ENCODE measurements at regions of chr15 and their contacts with region 1.

Region 1: DNA sequence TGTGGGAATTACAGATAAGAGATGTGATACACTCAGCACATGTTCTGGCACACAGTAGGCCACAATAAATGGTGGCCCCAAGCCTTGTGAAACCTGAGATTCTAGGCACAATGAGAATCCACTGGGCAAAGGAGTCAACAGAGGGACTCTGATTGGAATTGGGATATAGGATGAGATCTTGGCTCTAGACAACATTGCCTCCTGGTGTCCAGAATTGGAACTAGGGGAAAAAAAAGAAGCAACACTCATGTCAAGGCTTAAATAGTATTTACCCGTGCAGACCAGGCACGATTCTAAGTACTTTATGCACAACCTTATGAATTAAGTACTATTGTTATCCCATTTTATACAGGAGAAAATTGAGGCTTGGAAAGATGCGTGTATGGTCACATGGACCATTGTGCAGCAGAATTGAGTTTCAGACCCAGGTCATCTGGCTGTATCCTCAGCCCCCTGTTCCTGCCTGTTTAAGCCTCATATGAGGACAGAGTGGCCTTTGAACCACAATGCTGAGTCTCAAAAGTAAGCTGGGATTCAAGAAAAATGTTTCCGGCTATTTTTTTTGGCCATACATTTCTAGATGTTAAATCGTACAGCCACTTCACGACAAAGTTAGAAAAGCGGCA is 124.8 kb downstream of the SV2B start:
- DNase-seq: peak; percentile 68
- H3K4me3 ChIP-seq: no peak overlapping the region
- H3K27ac ChIP-seq: no peak overlapping the region
- H3K4me1 ChIP-seq: no peaks in the 10 kb centered on the region
- H3K27me3 ChIP-seq: no peaks in the 10 kb centered on the region
- CTCF ChIP-seq: peak; percentile 75

Region 2: GRCh38 chr15:91055548-91056331 is 169.1 kb before region 1 on chr15:
- CTCF ChIA-PET with region 1: interaction called, 4 read pairs
- POLR2A ChIA-PET with region 1: no interaction called
- intact Hi-C with region 1: loop called (anchors 1 kb)
- DNase-seq: peak; percentile 89
- H3K4me3 ChIP-seq: no peak overlapping the region
- H3K27ac ChIP-seq: no peak overlapping the region
- H3K4me1 ChIP-seq: peaks cover 11% of the 10 kb centered on the region
- H3K27me3 ChIP-seq: no peaks in the 10 kb centered on the region
- CTCF ChIP-seq: peak; percentile 85

Region 3: DNA sequence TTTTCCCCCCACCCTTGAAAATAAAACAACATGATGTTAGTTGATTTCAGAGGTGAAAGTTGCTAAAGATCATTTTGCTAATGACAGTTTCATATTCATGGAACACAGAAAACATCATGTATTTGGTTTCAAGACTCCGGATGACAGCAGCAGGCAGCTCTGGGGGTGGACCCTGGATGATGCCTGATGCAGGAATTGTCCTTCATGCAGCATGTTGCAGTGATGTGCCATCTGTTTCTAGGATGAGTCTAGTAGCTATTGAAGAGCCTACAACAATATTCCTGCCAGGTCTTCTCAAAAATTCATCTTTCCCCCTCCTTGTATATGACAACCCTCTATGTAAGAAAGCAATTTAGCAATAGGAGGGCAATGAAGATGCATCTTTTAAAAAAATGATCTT is 16.5 kb before region 1 on chr15:
- CTCF ChIA-PET with region 1: no interaction called
- POLR2A ChIA-PET with region 1: interaction called, 13 read pairs
- intact Hi-C with region 1: no loop called
- DNase-seq: no peak
- H3K4me3 ChIP-seq: no peak overlapping the region
- H3K27ac ChIP-seq: no peak overlapping the region
- H3K4me1 ChIP-seq: no peaks in the 10 kb centered on the region
- H3K27me3 ChIP-seq: peaks cover 3% of the 10 kb centered on the region
- CTCF ChIP-seq: no peak

Region 4: DNA sequence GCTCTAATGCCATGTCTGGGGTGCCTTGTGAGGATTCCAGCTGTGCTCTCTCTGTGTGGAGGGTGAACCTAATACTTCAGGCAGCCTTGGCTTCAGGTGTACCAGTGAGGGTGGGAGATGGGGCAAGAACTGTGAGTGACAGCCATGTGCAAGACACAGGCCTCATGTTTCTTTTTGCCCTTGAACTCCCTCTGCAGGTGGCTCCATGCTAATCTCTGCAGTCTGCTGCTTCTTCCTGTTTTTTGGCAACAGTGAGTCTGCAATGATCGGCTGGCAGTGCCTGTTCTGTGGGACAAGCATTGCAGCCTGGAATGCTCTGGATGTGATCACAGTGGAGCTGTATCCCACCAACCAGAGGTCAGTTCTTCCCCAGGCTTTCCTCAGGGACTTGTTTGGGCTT is 64.5 kb after region 1 on chr15:
- CTCF ChIA-PET with region 1: no interaction called
- POLR2A ChIA-PET with region 1: no interaction called
- intact Hi-C with region 1: no loop called
- DNase-seq: peak; percentile 16
- H3K4me3 ChIP-seq: no peak overlapping the region
- H3K27ac ChIP-seq: no peak overlapping the region
- H3K4me1 ChIP-seq: no peaks in the 10 kb centered on the region
- H3K27me3 ChIP-seq: no peaks in the 10 kb centered on the region
- CTCF ChIP-seq: peak; percentile 35; the same call in 1 of the 2 replicates

Region 5: DNA sequence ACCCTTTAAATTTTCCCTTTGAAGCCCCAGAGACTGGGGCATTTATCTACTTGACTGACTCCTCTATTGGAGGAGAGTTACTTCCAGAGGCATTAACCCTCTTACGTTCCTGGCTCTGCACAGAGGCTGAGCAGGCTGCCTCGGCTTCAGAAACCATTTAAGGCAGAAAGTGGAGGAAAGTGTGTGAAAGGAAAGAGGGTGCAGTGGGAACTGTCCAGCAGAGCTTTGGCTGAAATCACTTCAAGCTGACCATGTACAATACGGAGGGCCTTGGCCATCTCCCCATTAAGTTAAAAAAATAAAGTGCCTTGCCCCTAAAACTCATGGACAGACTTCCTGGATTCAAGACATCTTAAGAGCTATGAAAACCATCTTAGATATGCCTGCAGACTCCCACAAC is 113.9 kb after region 1 on chr15:
- CTCF ChIA-PET with region 1: no interaction called
- POLR2A ChIA-PET with region 1: no interaction called
- intact Hi-C with region 1: no loop called
- DNase-seq: peak; percentile 26
- H3K4me3 ChIP-seq: no peak overlapping the region
- H3K27ac ChIP-seq: no peak overlapping the region
- H3K4me1 ChIP-seq: no peaks in the 10 kb centered on the region
- H3K27me3 ChIP-seq: no peaks in the 10 kb centered on the region
- CTCF ChIP-seq: no peak

Measured in A673 (cell line).